ENCODE measurements at regions of chr17 and their contacts with region 1.

Region 1: DNA sequence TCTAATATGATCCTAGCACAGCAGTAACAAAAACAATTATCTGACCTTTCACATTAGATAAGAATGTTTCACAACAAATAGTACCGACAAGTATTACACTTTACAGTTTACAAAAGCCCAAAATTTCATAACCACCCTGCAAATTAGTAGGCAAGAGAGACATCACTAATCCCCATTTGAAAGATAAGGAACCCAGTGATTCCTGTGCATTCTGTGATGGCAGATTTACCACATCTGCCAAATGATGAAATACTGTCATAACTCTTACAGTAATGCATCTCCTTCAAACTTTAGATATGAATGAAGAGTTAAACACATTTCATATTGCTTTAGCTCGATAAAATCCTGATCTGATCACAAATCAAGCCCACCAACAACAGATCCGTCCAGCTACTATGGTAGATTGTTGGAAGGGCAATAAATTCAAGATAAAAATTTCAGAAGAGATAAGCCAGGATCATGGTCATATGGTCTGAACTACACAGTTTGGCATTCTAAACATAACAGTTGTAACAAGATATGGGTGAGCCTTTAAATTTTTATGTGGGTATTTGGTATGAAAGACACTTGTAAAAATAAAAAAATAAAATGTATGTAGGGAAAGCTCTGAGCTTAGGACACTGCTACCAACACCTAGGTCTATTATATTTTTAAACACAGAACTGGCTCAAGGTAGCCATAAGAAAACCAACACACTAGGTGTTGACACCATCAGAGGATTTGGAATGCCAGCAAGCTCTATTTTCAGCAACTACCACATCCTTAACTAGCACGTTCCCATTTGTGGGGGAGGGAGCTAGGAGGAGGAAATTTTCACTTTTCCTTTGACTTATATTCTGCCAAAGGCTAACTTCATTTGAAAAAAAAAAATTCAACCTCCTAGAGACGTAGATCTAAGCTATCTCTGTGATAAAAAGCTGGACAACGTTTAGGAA is 9.3 kb downstream of the YWHAE start:
- DNase-seq: no peak
- H3K4me3 ChIP-seq: no peak overlapping the region
- H3K27ac ChIP-seq: no peak overlapping the region
- H3K4me1 ChIP-seq: peaks cover 2 to 13% (median 11%) of the 10 kb centered on the region in 4 experiments; a peak in 5 of 7 replicates
- H3K27me3 ChIP-seq: no peaks in the 10 kb centered on the region
- CTCF ChIP-seq: no peak
- EP300 ChIP-seq: no peak
- POLR2A ChIP-seq: peak in 1 of 2 experiments; percentile 24; a peak in 1 of 3 replicates
- RAD21 ChIP-seq: no peak

Region 2: GRCh38 chr17:1374431-1375177 is 16.1 kb before region 1 on chr17:
- CTCF ChIA-PET with region 1: interaction called, 9 read pairs
- POLR2A ChIA-PET with region 1: interaction called, 82 read pairs
- DNase-seq: no peak
- H3K4me3 ChIP-seq: no peak overlapping the region
- H3K27ac ChIP-seq: no peak overlapping the region
- H3K4me1 ChIP-seq: no peaks in the 10 kb centered on the region; a peak in 2 of 7 replicates
- H3K27me3 ChIP-seq: no peaks in the 10 kb centered on the region
- CTCF ChIP-seq: no peak
- EP300 ChIP-seq: no peak
- POLR2A ChIP-seq: 0 out of 3 replicates have a peak, but pooled peaks of 1 of the 2 experiments have one; percentile 26
- RAD21 ChIP-seq: no peak

Region 3: DNA sequence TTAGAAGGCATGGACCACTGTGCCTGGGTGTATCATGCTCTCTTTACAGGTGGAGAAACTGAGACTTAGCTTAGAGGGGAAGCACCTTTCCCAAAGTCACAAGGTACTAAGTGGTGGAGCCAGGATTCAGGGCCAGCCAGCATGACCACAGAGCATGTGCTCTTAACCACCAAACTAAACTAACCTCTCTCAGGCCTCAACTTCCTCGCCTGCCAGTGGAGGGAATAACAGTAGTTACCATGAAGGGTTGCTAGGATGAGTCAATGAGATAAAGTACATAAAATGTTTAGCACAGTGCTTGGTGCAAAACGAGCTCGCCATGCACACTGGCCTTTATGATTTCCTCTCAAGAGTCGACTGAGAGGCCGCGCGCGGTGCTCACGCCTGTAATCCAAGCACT is 108.2 kb after region 1 on chr17:
- CTCF ChIA-PET with region 1: no interaction called
- POLR2A ChIA-PET with region 1: no interaction called
- DNase-seq: no peak
- H3K4me3 ChIP-seq: no peak overlapping the region
- H3K27ac ChIP-seq: no peak overlapping the region
- H3K4me1 ChIP-seq: no peaks in the 10 kb centered on the region
- H3K27me3 ChIP-seq: no peaks in the 10 kb centered on the region
- CTCF ChIP-seq: no peak
- EP300 ChIP-seq: no peak
- POLR2A ChIP-seq: no peak
- RAD21 ChIP-seq: no peak

Measured in H1 (cell line).